Aorta (tissue), 5 donors: ENCODE measurements at regions of chr2 and their contacts with region 1.

Region 1: GRCh38 chr2:182866461-182867406 is at the start of gene FRZB:
- DNase-seq: peak; percentile 77 to 90
- ATAC-seq: peak; percentile 87
- H3K4me3 ChIP-seq: peak within 1 kb of the TSS; percentile 61 to 66
- H3K27ac ChIP-seq: peak within 1 kb of the TSS; percentile 63 to 75
- H3K4me1 ChIP-seq: no peaks in the 10 kb centered on the region
- H3K27me3 ChIP-seq: no peaks in the 10 kb centered on the region
- total RNA-seq, gene FRZB: 71.4 to 122 TPM

Region 2: DNA sequence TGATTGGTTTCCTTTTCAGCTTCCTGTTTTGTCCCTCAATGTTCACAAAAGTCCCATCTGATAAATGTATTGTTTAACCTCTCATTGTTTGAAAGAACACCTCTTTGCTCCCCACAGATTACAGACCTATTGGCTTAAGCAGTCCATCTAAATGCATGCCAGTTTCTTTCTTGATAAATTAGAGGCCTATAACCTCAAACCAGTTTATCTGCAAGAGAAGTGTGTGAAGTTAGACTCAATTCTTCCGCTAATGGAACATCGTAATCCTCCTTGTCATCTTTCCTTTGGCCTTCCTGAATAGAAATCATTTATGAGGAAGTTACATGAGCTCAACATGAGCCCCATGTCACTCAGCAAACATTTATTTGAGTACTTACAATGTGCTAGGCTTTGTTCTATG is 74.3 kb before region 1 on chr2:
- intact Hi-C with region 1: loop called in 1 of 2 experiments (anchors 5 kb)
- DNase-seq: no peak
- ATAC-seq: no peak
- H3K4me3 ChIP-seq: no peak overlapping the region
- H3K27ac ChIP-seq: no peak overlapping the region
- H3K4me1 ChIP-seq: peaks cover 0 to 2% of the 10 kb centered on the region in 2 donors
- H3K27me3 ChIP-seq: no peaks in the 10 kb centered on the region

Region 3: GRCh38 chr2:182897137-182897536 is 30.4 kb after region 1 on chr2:
- intact Hi-C with region 1: loop called in 1 of 2 experiments (anchors 5 kb)
- DNase-seq: no peak
- ATAC-seq: no peak
- H3K4me3 ChIP-seq: no peak overlapping the region
- H3K27ac ChIP-seq: peak overlapping the region in 1 of 2 donors; percentile 82
- H3K4me1 ChIP-seq: no peaks in the 10 kb centered on the region
- H3K27me3 ChIP-seq: no peaks in the 10 kb centered on the region

Region 4: GRCh38 chr2:183019718-183020442 is 153.1 kb after region 1 on chr2:
- intact Hi-C with region 1: no loop called
- DNase-seq: no peak
- ATAC-seq: no peak
- H3K4me3 ChIP-seq: no peak overlapping the region
- H3K27ac ChIP-seq: no peak overlapping the region
- H3K4me1 ChIP-seq: peaks cover 0 to 5% of the 10 kb centered on the region in 2 donors
- H3K27me3 ChIP-seq: no peaks in the 10 kb centered on the region